ENCODE measurements at regions of chr6 and their contacts with region 1.

Region 1: DNA sequence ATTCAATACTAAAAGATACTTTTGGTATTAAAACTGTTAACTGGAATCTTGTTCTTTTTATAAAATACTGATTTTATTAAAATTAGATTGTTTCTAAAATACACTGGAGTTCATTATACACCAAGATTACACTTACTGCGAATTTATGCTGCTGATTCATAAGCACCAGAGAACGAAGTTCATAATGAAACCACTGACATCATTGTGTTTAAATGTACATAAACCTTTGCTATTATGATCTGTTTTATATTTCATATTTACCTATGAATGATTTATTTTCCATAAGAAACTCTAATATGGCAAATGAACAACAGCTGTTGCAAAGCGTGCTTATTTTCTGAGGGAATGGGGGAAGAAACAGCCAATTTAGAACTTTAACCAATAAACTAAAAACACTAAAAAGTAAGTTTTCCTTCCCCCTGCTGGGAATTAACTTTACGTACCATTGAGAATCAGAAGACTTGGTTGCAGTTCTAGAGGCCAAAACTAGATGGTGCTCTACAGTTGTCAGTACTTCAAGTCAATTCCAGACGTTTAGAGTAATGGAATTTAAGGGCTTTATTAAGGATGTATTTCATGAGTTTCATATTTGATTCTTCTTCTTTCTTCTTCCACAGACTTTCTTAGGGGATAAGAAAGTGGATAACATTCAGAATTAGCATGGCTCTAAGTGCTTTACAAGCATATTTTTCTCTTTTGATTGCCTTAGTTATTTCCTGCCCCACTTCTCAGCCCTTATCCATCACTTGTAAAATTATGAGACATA is 30.8 kb upstream of the COL19A1 start:
- DNase-seq: peak; percentile 66
- ATAC-seq: peak; percentile 49; the same call in 1 of the 2 replicates
- H3K4me3 ChIP-seq: no peak overlapping the region
- H3K27ac ChIP-seq: no peak overlapping the region
- H3K4me1 ChIP-seq: no peaks in the 10 kb centered on the region
- H3K27me3 ChIP-seq: peaks cover 17% of the 10 kb centered on the region; the same call in 1 of the 2 replicates
- CTCF ChIP-seq: peak; percentile 76

Region 2: DNA sequence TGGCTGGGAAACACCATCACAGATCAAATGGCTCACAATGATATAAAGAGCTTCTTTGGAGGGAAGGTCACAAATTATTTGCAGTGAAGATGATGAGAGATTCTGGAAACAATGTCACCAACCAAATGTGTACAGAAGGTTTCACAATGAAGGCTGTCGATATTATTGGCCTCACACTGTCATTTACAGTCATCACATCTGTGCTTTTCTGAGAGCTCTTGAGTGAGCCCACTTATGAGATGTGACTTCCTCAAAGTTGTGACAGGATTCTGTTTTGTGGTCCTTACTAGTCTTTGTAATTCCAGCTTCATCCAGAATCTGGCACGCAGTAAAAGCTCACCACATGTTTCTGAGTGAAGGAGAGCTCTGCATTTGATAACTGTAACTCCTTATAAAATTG is 172.4 kb before region 1 on chr6:
- CTCF ChIA-PET with region 1: no interaction called
- POLR2A ChIA-PET with region 1: no interaction called
- intact Hi-C with region 1: no loop called
- DNase-seq: no peak
- ATAC-seq: no peak
- H3K4me3 ChIP-seq: no peak overlapping the region
- H3K27ac ChIP-seq: no peak overlapping the region
- H3K4me1 ChIP-seq: no peaks in the 10 kb centered on the region
- H3K27me3 ChIP-seq: no peaks in the 10 kb centered on the region
- CTCF ChIP-seq: no peak

Region 3: DNA sequence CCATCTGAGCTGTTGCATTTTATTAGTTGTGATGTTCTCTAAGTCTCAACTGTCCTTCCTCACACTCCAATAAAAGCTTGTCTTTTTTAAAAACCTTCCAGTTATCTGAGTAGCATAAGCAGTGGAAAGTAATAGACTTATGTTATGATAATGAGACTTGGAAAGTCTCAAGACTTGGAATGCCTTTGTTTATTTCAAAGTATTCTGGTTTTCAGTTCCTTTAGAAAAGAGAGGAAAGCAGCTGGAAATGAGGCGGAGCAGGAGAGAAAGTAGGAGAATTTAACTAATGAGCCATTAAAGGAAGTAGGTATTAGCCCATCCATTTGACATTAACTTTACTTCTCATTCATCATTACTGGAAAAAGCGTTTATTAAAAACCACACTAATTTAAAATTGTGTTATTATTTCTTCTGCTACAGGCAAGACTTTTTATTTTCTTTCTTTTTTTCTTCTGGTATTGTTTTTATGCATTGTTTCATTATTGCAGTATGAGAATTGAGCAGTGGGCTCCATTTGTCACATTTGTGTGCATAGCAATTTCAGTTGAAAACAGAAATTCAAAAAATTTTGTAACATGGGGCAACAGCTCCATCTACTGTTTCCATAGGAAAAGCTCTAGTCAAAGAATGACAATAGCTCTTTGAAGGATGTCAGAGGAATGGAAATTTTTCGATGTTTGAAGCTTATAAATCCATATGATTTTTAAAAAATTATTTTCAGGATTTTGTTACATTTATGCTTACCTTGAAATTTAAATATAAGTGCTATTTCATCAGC is 272.4 kb after region 1 on chr6:
- CTCF ChIA-PET with region 1: no interaction called
- POLR2A ChIA-PET with region 1: no interaction called
- intact Hi-C with region 1: loop called (anchors 10 kb)
- DNase-seq: peak; percentile 54
- ATAC-seq: no peak
- H3K4me3 ChIP-seq: no peak overlapping the region
- H3K27ac ChIP-seq: no peak overlapping the region
- H3K4me1 ChIP-seq: no peaks in the 10 kb centered on the region
- H3K27me3 ChIP-seq: peaks cover 14% of the 10 kb centered on the region; the same call in 1 of the 2 replicates
- CTCF ChIP-seq: peak; percentile 69

Region 4: DNA sequence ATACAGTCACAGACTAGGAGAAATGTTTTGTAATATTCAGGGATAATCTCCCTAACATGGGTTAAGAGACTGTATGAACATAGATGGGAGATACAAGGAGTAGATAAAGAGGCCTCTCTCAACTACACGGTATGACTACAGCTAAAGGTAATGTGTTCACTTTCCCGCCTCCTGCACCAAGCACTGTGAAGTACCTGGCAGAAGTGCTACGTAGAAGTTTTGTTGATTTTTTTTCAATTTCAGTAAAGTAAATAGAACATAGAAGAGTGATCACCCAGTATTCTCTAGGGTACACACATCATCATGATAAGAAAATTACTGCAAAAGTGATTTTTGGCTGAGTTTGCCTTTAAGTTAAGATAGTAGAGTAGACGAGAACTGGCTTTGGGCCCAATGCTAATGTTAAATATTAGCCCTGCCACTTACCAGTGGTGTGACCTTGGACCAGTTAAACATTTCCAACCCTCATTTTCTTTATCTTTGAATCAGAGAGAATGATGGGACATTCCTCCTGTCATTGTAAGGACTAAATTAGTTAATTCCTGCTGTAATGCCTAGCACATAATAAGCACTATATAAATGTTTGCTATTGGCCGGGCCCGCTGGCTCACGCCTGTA is 283.7 kb after region 1 on chr6:
- CTCF ChIA-PET with region 1: no interaction called
- POLR2A ChIA-PET with region 1: no interaction called
- intact Hi-C with region 1: no loop called
- DNase-seq: no peak
- ATAC-seq: no peak
- H3K4me3 ChIP-seq: no peak overlapping the region
- H3K27ac ChIP-seq: no peak overlapping the region
- H3K4me1 ChIP-seq: no peaks in the 10 kb centered on the region
- H3K27me3 ChIP-seq: no peaks in the 10 kb centered on the region
- CTCF ChIP-seq: no peak